ENCODE measurements at regions of chr11 and their contacts with region 1.

Region 1: DNA sequence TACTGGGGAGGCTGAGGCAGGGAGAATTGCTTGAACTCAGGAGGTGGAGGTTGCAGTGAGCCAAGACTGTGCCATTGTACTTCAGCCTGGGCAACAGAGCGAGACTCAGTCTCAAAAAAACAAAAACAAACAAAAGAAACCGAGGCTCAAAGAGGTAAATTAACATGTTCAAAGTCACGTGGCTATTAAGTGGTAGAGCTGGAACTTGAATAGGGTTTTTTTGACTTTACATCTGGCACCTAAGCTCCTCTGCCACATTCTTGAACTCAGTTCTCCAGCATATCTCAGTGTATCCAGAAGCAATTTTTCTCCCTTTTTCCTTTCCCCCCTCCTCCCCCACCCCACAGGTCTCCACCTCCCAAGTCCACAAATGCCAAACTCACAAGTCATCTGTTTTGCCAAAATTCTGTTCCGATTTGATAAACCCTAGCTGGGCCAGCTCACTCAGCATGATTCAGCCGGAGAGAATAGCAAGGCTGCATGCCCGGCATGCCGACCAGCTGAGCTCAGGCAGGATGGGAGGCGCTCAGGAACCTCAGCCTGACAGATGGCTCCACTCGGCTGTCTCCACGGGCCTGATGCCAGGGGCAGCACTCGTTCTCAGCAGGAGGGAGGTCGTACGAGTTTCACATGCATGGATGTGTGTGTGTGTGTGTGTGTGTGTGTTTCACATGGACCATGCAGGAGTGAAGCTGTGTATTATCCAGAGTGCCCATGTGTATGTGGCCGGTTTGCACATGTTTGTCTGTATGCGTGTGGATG is 63.2 kb upstream of the RRAS2 start:
- H3K4me3 ChIP-seq: peak overlapping the region; percentile 5; the same call in 1 of the 2 replicates
- H3K27ac ChIP-seq: no peak overlapping the region
- H3K4me1 ChIP-seq: no peaks in the 10 kb centered on the region
- CTCF ChIP-seq: no peak

Region 2: GRCh38 chr11:14300661-14301304 is 121.5 kb before region 1 on chr11:
- CTCF ChIA-PET with region 1: interaction called, 99 read pairs
- POLR2A ChIA-PET with region 1: interaction called, 11 read pairs
- H3K4me3 ChIP-seq: no peak overlapping the region
- H3K27ac ChIP-seq: no peak overlapping the region
- H3K4me1 ChIP-seq: no peaks in the 10 kb centered on the region
- CTCF ChIP-seq: peak; percentile 49; the same call in 1 of the 2 replicates

Region 3: DNA sequence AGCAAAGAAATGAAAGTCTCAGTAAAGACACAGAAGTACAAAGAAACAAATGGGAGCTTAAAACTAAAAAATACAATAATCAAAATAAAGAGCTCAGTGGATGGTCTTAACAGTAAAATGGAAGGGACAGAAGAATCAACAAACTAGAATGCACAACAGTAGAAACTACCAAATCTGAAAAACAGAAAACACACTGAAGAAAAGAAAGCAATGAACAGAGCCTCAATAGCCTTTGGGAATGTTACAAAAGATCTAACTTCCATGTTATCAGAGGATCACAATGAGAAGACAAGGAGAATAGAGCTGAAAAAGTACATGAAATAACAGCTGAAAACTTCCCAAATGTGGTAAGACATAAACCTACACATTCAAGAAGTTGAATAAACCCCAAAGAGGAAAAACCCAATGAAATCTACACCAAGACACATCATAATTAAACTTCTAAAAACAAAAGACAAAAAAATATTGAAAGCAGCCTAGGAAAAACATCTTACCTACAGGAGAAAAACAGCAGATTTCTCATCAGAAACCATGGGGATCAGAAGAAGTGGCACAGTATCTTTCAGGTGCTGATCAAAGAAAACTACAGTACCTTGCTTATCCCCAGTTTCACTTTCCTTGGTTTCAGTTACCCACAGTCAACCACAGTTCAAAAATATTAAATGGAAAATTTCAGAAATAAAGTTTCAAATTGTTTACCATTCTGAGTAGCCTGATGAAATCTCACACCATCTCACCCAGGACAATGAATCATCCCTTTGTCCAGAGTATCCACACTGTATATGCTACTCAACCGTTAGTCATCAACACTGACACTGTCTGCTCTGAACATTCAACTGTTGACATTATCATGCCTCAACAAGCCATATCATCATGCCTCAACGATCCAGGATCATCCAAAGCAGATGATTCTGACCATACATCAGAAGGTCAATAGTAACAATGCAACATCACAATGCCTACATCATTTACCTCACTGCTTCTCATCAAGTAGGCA is 85.4 kb before region 1 on chr11:
- CTCF ChIA-PET with region 1: interaction called, 10 read pairs
- POLR2A ChIA-PET with region 1: no interaction called
- H3K4me3 ChIP-seq: no peak overlapping the region
- H3K27ac ChIP-seq: no peak overlapping the region
- H3K4me1 ChIP-seq: no peaks in the 10 kb centered on the region
- CTCF ChIP-seq: no peak

Region 4: GRCh38 chr11:14396273-14396672 is 26.0 kb before region 1 on chr11:
- CTCF ChIA-PET with region 1: interaction called, 12 read pairs
- POLR2A ChIA-PET with region 1: no interaction called
- H3K4me3 ChIP-seq: no peak overlapping the region
- H3K27ac ChIP-seq: no peak overlapping the region
- H3K4me1 ChIP-seq: no peaks in the 10 kb centered on the region
- CTCF ChIP-seq: no peak

Region 5: DNA sequence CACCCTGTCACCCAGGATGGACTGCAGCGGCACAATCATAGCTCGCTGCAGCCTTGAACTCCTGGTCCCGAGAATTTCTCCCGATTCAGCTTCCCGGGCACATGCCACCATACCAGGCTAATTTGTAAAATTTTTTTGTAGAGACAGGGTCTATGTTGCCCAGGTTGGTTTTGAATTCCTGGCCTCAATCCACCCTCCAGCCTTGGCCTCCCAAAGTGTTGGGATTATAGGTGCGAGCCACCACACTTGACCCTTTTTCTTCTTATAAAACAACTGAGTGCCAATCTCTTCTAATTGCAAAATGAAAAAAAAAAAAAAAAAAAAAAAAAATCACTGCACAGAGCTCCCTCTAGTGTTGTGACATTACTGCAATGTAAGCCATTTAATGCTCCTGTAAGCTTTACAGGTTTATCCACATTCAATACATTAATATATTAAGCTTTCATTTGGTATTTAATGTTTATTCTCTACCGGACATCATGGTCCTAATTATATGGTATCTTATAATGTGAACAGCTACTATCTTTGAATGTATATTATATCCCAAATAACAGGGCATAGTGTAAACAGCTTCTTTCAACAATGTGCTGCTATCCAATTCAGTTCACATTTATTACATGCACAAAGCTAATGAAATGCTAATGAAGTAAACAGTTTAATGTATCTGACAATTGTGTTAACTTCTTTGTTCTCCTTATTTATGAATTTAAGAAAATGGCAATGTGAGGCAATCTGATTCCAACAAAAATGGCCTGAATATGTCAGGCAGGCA is 32.8 kb after region 1 on chr11:
- CTCF ChIA-PET with region 1: interaction called, 38 read pairs
- POLR2A ChIA-PET with region 1: interaction called, 6 read pairs
- H3K4me3 ChIP-seq: no peak overlapping the region
- H3K27ac ChIP-seq: no peak overlapping the region
- H3K4me1 ChIP-seq: no peaks in the 10 kb centered on the region
- CTCF ChIP-seq: 0 out of 2 replicates have a peak, but pooled peaks have one; percentile 14